PC-3 (cell line): ENCODE measurements at regions of chr12 and their contacts with region 1.

Region 1: DNA sequence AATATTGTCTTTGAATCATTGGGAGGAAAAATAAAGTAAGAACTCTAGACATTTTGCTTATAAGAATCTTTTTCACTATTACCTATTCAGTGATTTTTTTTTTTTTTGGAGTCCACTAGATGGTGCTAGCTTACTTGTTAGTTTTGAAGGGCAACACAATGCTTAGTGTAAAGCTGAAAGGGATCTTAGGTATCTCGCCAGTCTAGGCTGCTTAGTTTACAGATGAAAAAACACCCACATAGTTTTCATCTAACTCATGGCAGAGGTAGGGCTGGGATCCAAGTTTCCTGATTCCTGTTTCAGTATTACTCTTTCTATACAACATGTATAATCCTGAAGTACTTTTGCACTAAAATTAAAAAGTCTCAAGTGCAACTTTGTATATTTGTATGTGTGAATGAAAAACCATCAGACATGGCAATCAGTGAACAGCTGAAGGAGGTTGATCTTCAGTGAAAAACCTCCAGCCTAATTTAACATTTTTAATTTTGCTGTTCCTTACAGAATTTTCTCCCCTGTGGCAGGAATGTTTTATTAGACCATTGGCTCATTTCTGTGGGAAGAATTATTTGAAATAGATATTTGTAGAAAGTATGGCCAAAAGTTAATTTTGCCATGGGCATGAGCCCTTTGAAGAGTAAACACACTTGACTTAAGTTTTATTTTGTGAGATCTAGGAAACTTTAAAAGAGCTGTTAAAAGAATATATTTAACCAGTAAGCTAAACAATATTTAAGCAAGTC is 40.7 kb downstream of the LRRIQ1 start:
- DNase-seq: peak; percentile 93
- ATAC-seq: peak; percentile 100
- H3K4me3 ChIP-seq: peak overlapping the region; percentile 8; the same call in 1 of the 2 replicates
- H3K27ac ChIP-seq: peak overlapping the region; percentile 17; the same call in 1 of the 2 replicates
- H3K4me1 ChIP-seq: peaks cover 9% of the 10 kb centered on the region
- H3K27me3 ChIP-seq: no peaks in the 10 kb centered on the region
- CTCF ChIP-seq: peak; percentile 77

Region 2: DNA sequence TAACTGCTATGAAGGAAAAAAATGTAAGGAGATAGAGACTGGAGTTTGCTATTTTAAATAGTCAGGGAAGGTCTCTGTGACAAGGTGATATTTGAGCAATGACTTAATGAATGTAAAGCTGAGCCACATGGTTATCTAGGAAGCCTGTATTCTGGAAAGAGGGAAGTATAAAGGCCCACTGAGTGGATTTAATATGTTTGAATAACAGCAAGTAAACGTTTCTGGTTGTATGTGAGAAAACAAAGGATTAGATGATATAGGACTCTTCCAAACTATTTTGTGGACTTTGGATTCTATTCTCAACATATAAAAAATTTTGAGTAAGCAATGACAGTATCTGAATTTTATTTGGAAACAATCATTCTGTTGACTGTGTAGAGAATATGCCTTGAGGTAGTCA is 35.5 kb before region 1 on chr12:
- CTCF ChIA-PET with region 1: no interaction called
- POLR2A ChIA-PET with region 1: no interaction called
- intact Hi-C with region 1: no loop called
- DNase-seq: no peak
- ATAC-seq: peak; percentile 94
- H3K4me3 ChIP-seq: no peak overlapping the region
- H3K27ac ChIP-seq: no peak overlapping the region
- H3K4me1 ChIP-seq: no peaks in the 10 kb centered on the region
- H3K27me3 ChIP-seq: 0 out of 2 replicates have a peak, but pooled peaks cover 2% of the 10 kb centered on the region
- CTCF ChIP-seq: no peak

Region 3: GRCh38 chr12:85092814-85093370 is 16.0 kb after region 1 on chr12:
- CTCF ChIA-PET with region 1: no interaction called
- POLR2A ChIA-PET with region 1: no interaction called
- intact Hi-C with region 1: loop called (anchors 1 kb)
- DNase-seq: peak; percentile 95
- ATAC-seq: peak; percentile 86
- H3K4me3 ChIP-seq: peak overlapping the region; percentile 11; the same call in 1 of the 2 replicates
- H3K27ac ChIP-seq: peak overlapping the region; percentile 94
- H3K4me1 ChIP-seq: peaks cover 26% of the 10 kb centered on the region
- H3K27me3 ChIP-seq: no peaks in the 10 kb centered on the region
- CTCF ChIP-seq: no peak

Region 4: DNA sequence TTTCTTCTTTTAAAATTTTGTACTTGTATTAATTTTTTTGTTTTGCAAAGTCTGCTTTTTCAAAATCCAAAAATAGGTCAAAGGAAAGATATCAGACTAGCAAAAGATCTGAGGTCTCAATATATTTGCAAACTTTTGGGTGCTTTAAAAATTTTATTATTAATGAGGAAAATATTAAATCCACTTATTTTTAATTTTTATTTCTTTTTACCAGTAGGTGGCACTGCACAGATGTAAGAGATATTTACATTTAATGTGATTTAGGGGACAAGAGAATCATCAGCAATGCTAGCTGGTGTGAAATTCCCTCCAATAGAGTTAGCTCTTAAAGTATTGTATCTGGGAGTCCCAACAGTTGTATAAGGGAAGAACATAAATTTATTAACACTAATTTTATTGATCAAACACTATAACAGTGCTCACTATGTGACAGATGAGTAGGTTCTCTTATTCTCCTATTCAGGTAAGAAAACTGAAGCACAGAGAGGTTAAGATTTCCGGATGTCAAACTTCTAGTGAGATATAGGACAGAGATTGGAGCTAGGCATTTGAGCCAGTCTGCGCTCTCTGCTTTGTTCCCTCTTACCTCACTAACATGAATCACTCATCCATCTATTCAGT is 233.7 kb after region 1 on chr12:
- CTCF ChIA-PET with region 1: no interaction called
- POLR2A ChIA-PET with region 1: no interaction called
- intact Hi-C with region 1: loop called (anchors 5 kb)
- DNase-seq: peak; percentile 45
- ATAC-seq: peak; percentile 18; the same call in 1 of the 2 replicates
- H3K4me3 ChIP-seq: no peak overlapping the region
- H3K27ac ChIP-seq: no peak overlapping the region
- H3K4me1 ChIP-seq: no peaks in the 10 kb centered on the region
- H3K27me3 ChIP-seq: peaks cover 17% of the 10 kb centered on the region
- CTCF ChIP-seq: peak; percentile 51; the same call in 1 of the 2 replicates

Region 5: GRCh38 chr12:85356596-85357385 is 279.9 kb after region 1 on chr12:
- CTCF ChIA-PET with region 1: no interaction called
- POLR2A ChIA-PET with region 1: no interaction called
- intact Hi-C with region 1: loop called (anchors 2 kb)
- DNase-seq: peak; percentile 63
- ATAC-seq: peak; percentile 87
- H3K4me3 ChIP-seq: no peak overlapping the region
- H3K27ac ChIP-seq: peak overlapping the region; percentile 66
- H3K4me1 ChIP-seq: peaks cover 32% of the 10 kb centered on the region
- H3K27me3 ChIP-seq: no peaks in the 10 kb centered on the region
- CTCF ChIP-seq: no peak

Region 6: GRCh38 chr12:85448548-85449139 is 371.8 kb after region 1 on chr12:
- CTCF ChIA-PET with region 1: no interaction called
- POLR2A ChIA-PET with region 1: no interaction called
- intact Hi-C with region 1: loop called (anchors 1 kb)
- DNase-seq: peak; percentile 56
- ATAC-seq: no peak
- H3K4me3 ChIP-seq: no peak overlapping the region
- H3K27ac ChIP-seq: no peak overlapping the region
- H3K4me1 ChIP-seq: no peaks in the 10 kb centered on the region
- H3K27me3 ChIP-seq: no peaks in the 10 kb centered on the region
- CTCF ChIP-seq: peak; percentile 57

Region 7: GRCh38 chr12:85920324-85920947 is 843.6 kb after region 1 on chr12:
- CTCF ChIA-PET with region 1: no interaction called
- POLR2A ChIA-PET with region 1: no interaction called
- intact Hi-C with region 1: loop called (anchors 2 kb)
- DNase-seq: peak; percentile 78
- ATAC-seq: peak; percentile 55; the same call in 1 of the 2 replicates
- H3K4me3 ChIP-seq: no peak overlapping the region
- H3K27ac ChIP-seq: no peak overlapping the region
- H3K4me1 ChIP-seq: no peaks in the 10 kb centered on the region
- H3K27me3 ChIP-seq: no peaks in the 10 kb centered on the region
- CTCF ChIP-seq: peak; percentile 75